CD8-positive, alpha-beta T cell (primary cell): ENCODE measurements at regions of chr5 and their contacts with region 1.

Region 1: GRCh38 chr5:76402886-76403765 is at the start of gene IQGAP2:
- DNase-seq: peak; percentile 73 to 97 (median 82)
- ATAC-seq: peak; percentile 54
- H3K4me3 ChIP-seq: peak within 1 kb of the TSS; percentile 77 to 93
- H3K4me3 Mint-ChIP-seq: peak within 1 kb of the TSS; percentile 95
- H3K27ac ChIP-seq: peak within 1 kb of the TSS; percentile 86 to 90
- H3K27ac Mint-ChIP-seq: peak within 1 kb of the TSS; percentile 98
- H3K4me1 ChIP-seq: peaks cover 44% of the 10 kb centered on the region
- H3K4me1 Mint-ChIP-seq: peaks cover 54% of the 10 kb centered on the region
- H3K27me3 ChIP-seq: no peaks in the 10 kb centered on the region
- H3K27me3 Mint-ChIP-seq: no peaks in the 10 kb centered on the region
- CTCF ChIP-seq: peak; percentile 70
- total RNA-seq, gene IQGAP2: 30.9 to 34.3 TPM

Region 2: DNA sequence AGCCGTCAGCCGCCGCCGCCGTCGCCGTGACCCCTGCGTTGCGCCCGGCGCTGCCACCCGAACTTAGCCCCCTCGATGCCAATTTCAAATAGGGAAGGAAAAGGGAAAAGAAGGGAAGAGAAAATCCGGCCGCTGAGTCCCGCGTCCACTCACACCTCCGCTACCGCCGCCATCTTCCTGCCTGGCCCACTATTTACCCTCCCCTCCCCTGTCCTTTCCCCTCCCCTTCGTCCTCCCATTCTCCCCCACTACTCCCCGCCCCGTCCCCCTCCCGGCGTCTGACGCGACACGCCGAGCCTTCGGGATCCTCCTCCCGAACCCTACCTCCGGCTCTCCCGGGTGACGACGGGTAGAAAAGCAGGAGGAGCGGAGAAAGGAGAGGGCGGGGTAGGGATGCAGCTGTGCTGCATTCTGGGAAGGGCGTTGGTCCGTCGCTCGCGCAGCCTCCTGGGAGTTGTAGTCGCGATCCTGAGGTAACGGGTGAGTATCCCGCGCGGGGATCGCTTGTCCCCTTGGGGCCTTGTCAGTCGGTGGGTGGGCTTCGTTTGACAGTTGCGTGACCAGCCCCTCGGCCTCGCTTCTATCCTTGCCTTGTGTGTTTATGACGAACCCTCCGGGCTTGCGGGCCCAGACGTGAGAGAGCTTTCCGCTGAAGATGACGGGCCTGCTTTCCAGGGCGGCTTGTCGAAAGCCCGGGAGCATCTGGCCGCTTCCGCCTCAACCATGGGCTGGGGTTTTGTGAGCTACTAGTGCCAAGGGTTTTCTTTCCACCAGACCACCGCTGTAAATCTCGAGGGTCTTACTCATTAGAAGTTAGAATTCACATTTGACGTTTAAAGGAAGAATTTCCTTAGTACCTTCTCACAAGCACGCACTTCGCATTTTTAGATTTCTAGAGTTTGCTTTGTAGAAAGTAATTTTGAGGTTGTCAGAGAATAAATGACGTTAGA is 891.4 kb before region 1 on chr5 and contains the starts of genes CERT1 and POLK:
- CTCF ChIA-PET with region 1: no interaction called
- POLR2A ChIA-PET with region 1: no interaction called
- intact Hi-C with region 1: loop called (anchors 2 to 5 kb)
- DNase-seq: peak; percentile 78 to 97 (median 89)
- ATAC-seq: peak; percentile 87
- H3K4me3 ChIP-seq: peak within 1 kb of the TSS; percentile 72 to 79
- H3K4me3 Mint-ChIP-seq: peak within 1 kb of the TSS; percentile 96
- H3K27ac ChIP-seq: peak within 1 kb of the TSS; percentile 74 to 78
- H3K27ac Mint-ChIP-seq: peak within 1 kb of the TSS; percentile 97
- H3K4me1 ChIP-seq: peaks cover 29% of the 10 kb centered on the region
- H3K4me1 Mint-ChIP-seq: peaks cover 64% of the 10 kb centered on the region
- H3K27me3 ChIP-seq: no peaks in the 10 kb centered on the region
- H3K27me3 Mint-ChIP-seq: no peaks in the 10 kb centered on the region
- CTCF ChIP-seq: no peak
- total RNA-seq, gene CERT1: 29.2 to 36.4 TPM
- total RNA-seq, gene POLK: 6.9 to 10.0 TPM

Region 3: GRCh38 chr5:75824323-75824722 is 578.8 kb before region 1 on chr5:
- CTCF ChIA-PET with region 1: no interaction called
- POLR2A ChIA-PET with region 1: no interaction called
- intact Hi-C with region 1: no loop called
- DNase-seq: no peak
- ATAC-seq: no peak
- H3K4me3 ChIP-seq: no peak overlapping the region
- H3K4me3 Mint-ChIP-seq: no peak overlapping the region
- H3K27ac ChIP-seq: no peak overlapping the region
- H3K27ac Mint-ChIP-seq: no peak overlapping the region
- H3K4me1 ChIP-seq: no peaks in the 10 kb centered on the region
- H3K4me1 Mint-ChIP-seq: no peaks in the 10 kb centered on the region
- H3K27me3 ChIP-seq: no peaks in the 10 kb centered on the region
- H3K27me3 Mint-ChIP-seq: no peaks in the 10 kb centered on the region
- CTCF ChIP-seq: no peak

Region 4: DNA sequence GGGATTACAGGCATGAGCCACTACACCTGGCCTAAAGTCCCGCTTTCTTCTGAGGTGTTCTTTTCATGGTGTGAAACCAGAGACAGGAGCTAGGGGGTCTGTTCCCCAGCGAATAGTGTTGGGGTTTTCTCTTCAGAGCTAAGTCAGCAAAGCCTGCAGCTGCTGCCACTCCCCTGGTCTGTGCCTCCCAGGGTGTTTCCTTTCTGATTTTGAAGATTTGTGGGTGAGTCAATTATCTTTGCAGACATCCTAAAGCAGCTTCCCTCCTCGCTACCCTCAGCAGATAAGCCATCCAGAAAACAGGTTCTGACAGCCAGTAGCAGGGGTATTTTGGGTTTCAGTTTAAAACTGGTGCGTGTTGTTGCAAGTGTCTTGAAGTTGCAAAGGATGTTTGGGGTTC is 72.0 kb before region 1 on chr5:
- CTCF ChIA-PET with region 1: interaction called, 13 read pairs
- POLR2A ChIA-PET with region 1: interaction called, 15 read pairs
- intact Hi-C with region 1: loop called in 1 of 2 experiments (anchors 2 kb)
- DNase-seq: peak in 8 of 9 experiments; percentile 22 to 66 (median 34)
- ATAC-seq: peak; percentile 79
- H3K4me3 ChIP-seq: no peak overlapping the region
- H3K4me3 Mint-ChIP-seq: peak overlapping the region; percentile 65
- H3K27ac ChIP-seq: peak overlapping the region in 1 of 2 experiments; percentile 51
- H3K27ac Mint-ChIP-seq: peak overlapping the region; percentile 84
- H3K4me1 ChIP-seq: peaks cover 37% of the 10 kb centered on the region
- H3K4me1 Mint-ChIP-seq: peaks cover 63% of the 10 kb centered on the region
- H3K27me3 ChIP-seq: no peaks in the 10 kb centered on the region
- H3K27me3 Mint-ChIP-seq: no peaks in the 10 kb centered on the region
- CTCF ChIP-seq: peak; percentile 11

Region 5: DNA sequence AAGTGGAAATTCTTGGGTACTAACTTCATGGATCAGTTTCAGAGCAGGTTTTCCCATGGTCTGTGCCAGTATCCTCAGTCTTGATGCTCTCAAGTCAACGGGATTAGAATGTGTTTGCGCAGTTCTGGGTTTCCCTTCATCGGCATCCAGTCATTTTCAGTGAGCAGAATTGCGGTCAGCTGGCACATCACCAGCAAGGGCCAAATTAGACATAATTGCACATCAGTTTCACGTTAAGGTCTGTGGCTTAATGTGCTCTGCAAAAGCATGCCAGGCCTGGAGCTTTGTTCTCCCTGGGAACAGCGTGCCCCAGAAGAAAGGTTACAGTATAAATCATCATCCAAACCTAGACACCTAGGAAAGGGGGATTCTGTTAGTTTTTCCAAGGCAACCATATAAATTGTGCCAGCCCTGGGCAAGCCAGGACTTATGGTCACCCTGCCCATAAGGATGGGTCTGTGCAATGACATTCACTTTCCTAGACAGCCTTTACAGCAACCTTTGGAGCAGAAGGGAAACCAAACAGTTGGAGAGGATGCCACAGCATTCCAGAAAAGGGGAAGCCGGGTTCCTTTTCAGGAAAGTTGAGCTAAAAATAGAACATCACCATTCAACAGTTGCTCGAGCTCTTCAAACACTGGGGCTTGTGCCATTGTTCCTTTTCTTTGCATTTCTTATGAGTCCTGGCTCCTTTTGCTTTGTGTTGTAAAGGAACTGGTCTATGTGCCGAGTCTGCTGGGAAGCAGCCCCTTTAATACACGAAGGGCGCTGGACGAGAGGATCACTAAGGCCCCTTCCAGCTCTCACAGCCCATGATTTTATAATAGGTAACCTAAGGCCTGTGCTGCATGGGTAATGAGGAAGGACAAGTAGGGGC is 23.0 kb after region 1 on chr5:
- CTCF ChIA-PET with region 1: interaction called, 3 read pairs
- POLR2A ChIA-PET with region 1: interaction called, 5 read pairs
- intact Hi-C with region 1: loop called in 1 of 2 experiments (anchors 2 kb)
- DNase-seq: no peak
- ATAC-seq: no peak
- H3K4me3 ChIP-seq: no peak overlapping the region
- H3K4me3 Mint-ChIP-seq: no peak overlapping the region
- H3K27ac ChIP-seq: no peak overlapping the region
- H3K27ac Mint-ChIP-seq: peak overlapping the region; percentile 15
- H3K4me1 ChIP-seq: no peaks in the 10 kb centered on the region
- H3K4me1 Mint-ChIP-seq: peaks cover 64% of the 10 kb centered on the region
- H3K27me3 ChIP-seq: no peaks in the 10 kb centered on the region
- H3K27me3 Mint-ChIP-seq: no peaks in the 10 kb centered on the region
- CTCF ChIP-seq: no peak

Region 6: GRCh38 chr5:76576996-76577395 is 173.9 kb after region 1 on chr5:
- CTCF ChIA-PET with region 1: interaction called, 34 read pairs
- POLR2A ChIA-PET with region 1: interaction called, 11 read pairs
- intact Hi-C with region 1: loop called in 1 of 2 experiments (anchors 2 kb)
- DNase-seq: no peak
- ATAC-seq: no peak
- H3K4me3 ChIP-seq: no peak overlapping the region
- H3K4me3 Mint-ChIP-seq: no peak overlapping the region
- H3K27ac ChIP-seq: no peak overlapping the region
- H3K27ac Mint-ChIP-seq: no peak overlapping the region
- H3K4me1 ChIP-seq: no peaks in the 10 kb centered on the region
- H3K4me1 Mint-ChIP-seq: peaks cover 12% of the 10 kb centered on the region
- H3K27me3 ChIP-seq: no peaks in the 10 kb centered on the region
- H3K27me3 Mint-ChIP-seq: no peaks in the 10 kb centered on the region
- CTCF ChIP-seq: no peak

Region 7: GRCh38 chr5:76733049-76733417 is 329.9 kb after region 1 on chr5:
- CTCF ChIA-PET with region 1: no interaction called
- POLR2A ChIA-PET with region 1: interaction called, 4 read pairs
- intact Hi-C with region 1: loop called (anchors 1 to 2 kb)
- DNase-seq: peak in 6 of 9 experiments; percentile 42 to 94 (median 75)
- ATAC-seq: peak; percentile 81
- H3K4me3 ChIP-seq: peak overlapping the region in 1 of 2 experiments; percentile 27
- H3K4me3 Mint-ChIP-seq: peak overlapping the region; percentile 68
- H3K27ac ChIP-seq: peak overlapping the region; percentile 65 to 82
- H3K27ac Mint-ChIP-seq: peak overlapping the region; percentile 92
- H3K4me1 ChIP-seq: peaks cover 14% of the 10 kb centered on the region
- H3K4me1 Mint-ChIP-seq: peaks cover 37% of the 10 kb centered on the region
- H3K27me3 ChIP-seq: no peaks in the 10 kb centered on the region
- H3K27me3 Mint-ChIP-seq: no peaks in the 10 kb centered on the region
- CTCF ChIP-seq: no peak

Region 8: GRCh38 chr5:77775790-77776553 is 1372.8 kb after region 1 on chr5 and contains the start of gene TBCA:
- CTCF ChIA-PET with region 1: no interaction called
- POLR2A ChIA-PET with region 1: no interaction called
- intact Hi-C with region 1: loop called in 1 of 2 experiments (anchors 5 kb)
- DNase-seq: peak; percentile 84 to 97 (median 93)
- ATAC-seq: peak; percentile 80
- H3K4me3 ChIP-seq: peak within 1 kb of the TSS; percentile 65 to 80
- H3K4me3 Mint-ChIP-seq: peak within 1 kb of the TSS; percentile 88
- H3K27ac ChIP-seq: peak within 1 kb of the TSS; percentile 91 to 96
- H3K27ac Mint-ChIP-seq: peak within 1 kb of the TSS; percentile 98
- H3K4me1 ChIP-seq: peaks cover 41% of the 10 kb centered on the region
- H3K4me1 Mint-ChIP-seq: peaks cover 51% of the 10 kb centered on the region
- H3K27me3 ChIP-seq: no peaks in the 10 kb centered on the region
- H3K27me3 Mint-ChIP-seq: no peaks in the 10 kb centered on the region
- CTCF ChIP-seq: no peak
- total RNA-seq, gene TBCA: 72.2 to 74.6 TPM